ENCODE measurements at regions of chr3 and their contacts with region 1.

Region 1: DNA sequence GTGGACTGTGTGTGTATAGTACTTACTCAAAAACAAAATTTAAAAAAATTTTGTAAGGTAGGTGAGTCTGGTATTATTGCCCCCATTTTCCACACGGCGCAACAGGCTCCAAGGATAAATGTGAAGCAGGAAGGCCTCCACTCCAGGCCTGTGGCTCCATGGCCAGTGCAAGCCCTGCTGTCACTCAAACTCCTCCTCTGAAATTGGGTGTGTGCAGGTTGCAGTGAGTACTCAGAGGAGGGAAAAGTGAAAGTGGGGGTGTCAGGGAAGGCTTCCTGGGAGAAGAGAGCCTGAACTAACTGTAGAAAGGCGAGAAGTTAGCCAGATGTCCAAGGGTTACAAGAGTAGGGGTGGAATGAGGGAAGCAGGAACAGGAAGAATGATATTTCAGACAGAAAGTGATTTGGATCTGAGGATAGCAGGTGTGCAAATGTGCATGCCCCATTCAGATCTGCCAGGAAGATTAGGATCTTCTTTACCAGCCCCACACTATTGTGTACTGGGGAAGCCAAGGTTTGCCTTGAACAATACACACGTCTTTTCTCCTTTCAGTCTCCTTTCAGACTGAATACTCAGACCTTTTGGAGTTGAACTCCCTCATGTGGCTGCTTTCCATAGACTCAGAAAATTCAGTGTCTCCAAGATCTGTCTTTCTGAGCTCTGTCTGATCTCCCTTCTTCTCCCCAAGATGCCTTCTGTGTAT is 48.7 kb upstream of the RYK start:
- DNase-seq: no peak
- H3K4me3 ChIP-seq: no peak overlapping the region
- H3K27me3 ChIP-seq: no peaks in the 10 kb centered on the region
- CTCF ChIP-seq: peak; percentile 53

Region 2: GRCh38 chr3:134197681-134198261 is 101.6 kb before region 1 on chr3:
- CTCF ChIA-PET with region 1: interaction called, 10 read pairs
- POLR2A ChIA-PET with region 1: no interaction called
- DNase-seq: peak; percentile 32
- H3K4me3 ChIP-seq: no peak overlapping the region
- H3K27me3 ChIP-seq: no peaks in the 10 kb centered on the region
- CTCF ChIP-seq: peak; percentile 78

Region 3: GRCh38 chr3:134250717-134251220 is 48.6 kb before region 1 on chr3 and contains the start of gene RYK:
- CTCF ChIA-PET with region 1: no interaction called
- POLR2A ChIA-PET with region 1: no interaction called
- DNase-seq: no peak
- H3K4me3 ChIP-seq: peak within 1 kb of the TSS; percentile 52
- H3K27me3 ChIP-seq: no peaks in the 10 kb centered on the region; the same call in 1 of the 2 replicates
- CTCF ChIP-seq: no peak
- polyA plus RNA-seq, gene RYK: 41.3 and 60.9 TPM in 2 replicates